MCF 10A (cell line): ENCODE measurements at regions of chr5 and their contacts with region 1.

Region 1: DNA sequence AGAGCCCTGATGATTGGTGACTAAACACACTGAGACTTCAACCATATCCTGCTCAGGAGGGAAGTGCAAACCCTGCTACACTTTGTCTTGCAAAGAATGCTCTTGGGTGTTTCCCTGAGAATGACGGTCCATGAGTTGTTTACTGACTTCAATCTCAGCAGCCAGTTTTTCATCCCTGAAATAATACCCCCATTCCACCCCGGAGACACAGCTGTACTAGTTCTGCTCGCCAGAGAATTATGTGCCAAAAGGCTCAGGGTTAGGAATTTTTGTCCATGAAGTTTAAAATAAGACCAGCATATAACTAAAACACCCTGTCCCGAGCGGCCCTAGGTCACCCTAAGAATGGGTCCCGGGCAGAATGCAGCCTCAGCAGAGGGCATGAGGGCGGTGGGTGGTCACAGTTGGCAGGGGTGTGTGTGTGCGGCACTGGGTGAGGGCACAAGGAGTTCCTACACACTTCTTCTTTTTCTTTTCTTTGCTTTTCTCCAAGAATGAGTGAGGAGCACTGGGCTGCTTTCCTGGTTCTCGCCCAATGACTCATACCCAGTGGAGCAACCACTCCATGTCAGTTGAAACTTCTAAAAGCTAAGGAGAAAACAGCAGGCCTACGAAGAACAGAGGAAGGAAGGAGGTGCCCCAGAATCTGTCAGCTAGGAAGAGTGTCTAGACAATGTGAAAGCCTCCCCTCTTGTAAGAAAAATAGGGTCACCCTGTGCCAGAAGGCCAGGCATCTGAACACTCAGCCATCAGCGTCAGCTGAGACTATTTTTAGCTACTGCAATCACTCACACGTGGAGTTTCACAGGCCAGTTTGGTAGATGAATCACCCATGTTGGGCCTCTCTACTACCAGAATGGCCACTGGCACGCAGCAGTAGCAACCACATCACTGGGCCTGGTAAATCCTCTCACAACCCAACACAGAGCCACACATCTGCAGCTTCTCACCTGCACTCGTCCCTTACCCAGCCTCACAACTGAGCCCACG is 105.9 kb downstream of the DPYSL3 start:
- DNase-seq: peak; percentile 95
- H3K4me3 Mint-ChIP-seq: no peak overlapping the region
- H3K27ac Mint-ChIP-seq: peak overlapping the region; percentile 91
- H3K4me1 Mint-ChIP-seq: peaks cover 20% of the 10 kb centered on the region
- H3K27me3 Mint-ChIP-seq: no peaks in the 10 kb centered on the region
- CTCF ChIP-seq: no peak

Region 2: DNA sequence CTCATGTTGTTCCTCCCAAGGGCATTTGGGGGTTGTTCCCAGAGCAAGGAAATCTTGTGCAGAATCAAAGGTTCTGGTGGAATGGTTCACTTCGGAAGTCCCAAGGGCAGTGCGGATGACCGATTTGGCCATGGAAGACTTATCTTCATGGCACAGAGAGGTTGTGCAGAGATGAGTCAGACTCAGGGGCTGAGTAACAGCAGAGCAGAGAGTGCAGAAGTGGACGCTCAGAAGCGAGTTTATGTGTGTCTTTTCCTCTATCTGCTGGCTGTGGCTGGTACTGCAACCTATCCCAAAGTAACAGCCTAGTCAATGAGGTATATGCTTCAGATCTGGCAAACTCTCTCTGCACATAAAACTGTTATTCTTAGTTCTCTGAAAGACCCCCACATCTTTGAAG is 12.2 kb before region 1 on chr5:
- CTCF ChIA-PET with region 1: interaction called, 30 read pairs
- POLR2A ChIA-PET with region 1: interaction called, 6 read pairs
- intact Hi-C with region 1: no loop called
- DNase-seq: peak; percentile 89
- H3K4me3 Mint-ChIP-seq: no peak overlapping the region
- H3K27ac Mint-ChIP-seq: no peak overlapping the region
- H3K4me1 Mint-ChIP-seq: no peaks in the 10 kb centered on the region
- H3K27me3 Mint-ChIP-seq: no peaks in the 10 kb centered on the region
- CTCF ChIP-seq: peak; percentile 87

Region 3: GRCh38 chr5:147427521-147428401 is 23.8 kb after region 1 on chr5:
- CTCF ChIA-PET with region 1: interaction called, 7 read pairs
- POLR2A ChIA-PET with region 1: interaction called, 10 read pairs
- intact Hi-C with region 1: no loop called
- DNase-seq: peak; percentile 60
- H3K4me3 Mint-ChIP-seq: no peak overlapping the region
- H3K27ac Mint-ChIP-seq: no peak overlapping the region
- H3K4me1 Mint-ChIP-seq: peaks cover 29% of the 10 kb centered on the region
- H3K27me3 Mint-ChIP-seq: no peaks in the 10 kb centered on the region
- CTCF ChIP-seq: no peak